ENCODE measurements at regions of chr9 and their contacts with region 1.

Region 1: DNA sequence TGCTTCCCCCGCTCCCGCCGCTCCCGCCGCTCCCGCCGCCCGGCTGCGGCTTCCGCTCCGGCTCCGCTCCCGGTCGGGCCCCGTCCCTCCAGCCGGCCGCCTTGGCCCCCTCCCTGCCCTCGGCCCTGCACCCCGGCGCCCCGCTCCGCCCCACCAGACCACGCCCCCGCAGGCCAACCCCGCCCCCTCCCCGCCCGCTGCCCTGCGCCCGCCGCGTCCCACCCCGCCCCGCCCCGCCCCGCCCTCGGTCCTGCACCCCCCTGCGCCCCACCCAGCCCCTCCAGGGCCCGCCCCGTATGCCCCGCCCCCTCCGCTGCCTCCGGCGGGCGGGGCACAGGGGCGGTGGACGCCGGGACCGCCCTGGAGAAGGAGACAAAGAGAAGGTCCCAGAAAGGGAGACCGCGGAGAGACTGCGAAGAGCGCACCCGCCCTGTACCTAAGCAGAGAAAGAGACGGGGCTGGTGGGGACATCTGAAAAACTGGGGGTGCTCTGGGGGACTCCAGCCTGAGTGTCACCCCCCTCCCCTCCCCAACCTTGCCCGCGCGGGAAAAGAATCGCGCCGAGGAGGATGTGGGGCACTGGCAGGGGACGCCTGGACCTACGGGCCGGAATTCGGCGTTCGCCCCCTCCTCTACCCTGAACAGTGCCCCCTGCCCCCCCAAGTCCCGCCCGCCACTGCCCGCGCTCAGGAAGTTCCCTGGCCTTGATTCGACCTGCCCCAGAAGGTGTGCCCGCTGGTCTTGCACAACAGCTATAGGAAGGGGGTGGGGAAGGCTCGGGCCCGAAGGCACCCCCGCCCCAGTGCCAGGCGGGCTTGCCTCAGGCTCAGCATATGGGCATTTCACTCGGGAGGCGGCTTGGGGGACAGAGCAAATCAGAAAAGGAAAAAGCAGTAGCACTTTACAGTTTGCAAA is 42.8 kb upstream of the STXBP1 start:
- DNase-seq: peak; percentile 74
- H3K4me3 Mint-ChIP-seq: peak overlapping the region; percentile 77
- H3K27ac Mint-ChIP-seq: peak overlapping the region; percentile 12
- H3K4me1 Mint-ChIP-seq: peaks cover 18% of the 10 kb centered on the region
- H3K27me3 Mint-ChIP-seq: no peaks in the 10 kb centered on the region

Region 2: GRCh38 chr9:127166651-127167524 is 402.3 kb before region 1 on chr9:
- CTCF ChIA-PET with region 1: no interaction called
- intact Hi-C with region 1: no loop called
- DNase-seq: peak; percentile 20
- H3K4me3 Mint-ChIP-seq: no peak overlapping the region
- H3K27ac Mint-ChIP-seq: no peak overlapping the region
- H3K4me1 Mint-ChIP-seq: peaks cover 12% of the 10 kb centered on the region
- H3K27me3 Mint-ChIP-seq: no peaks in the 10 kb centered on the region

Region 3: DNA sequence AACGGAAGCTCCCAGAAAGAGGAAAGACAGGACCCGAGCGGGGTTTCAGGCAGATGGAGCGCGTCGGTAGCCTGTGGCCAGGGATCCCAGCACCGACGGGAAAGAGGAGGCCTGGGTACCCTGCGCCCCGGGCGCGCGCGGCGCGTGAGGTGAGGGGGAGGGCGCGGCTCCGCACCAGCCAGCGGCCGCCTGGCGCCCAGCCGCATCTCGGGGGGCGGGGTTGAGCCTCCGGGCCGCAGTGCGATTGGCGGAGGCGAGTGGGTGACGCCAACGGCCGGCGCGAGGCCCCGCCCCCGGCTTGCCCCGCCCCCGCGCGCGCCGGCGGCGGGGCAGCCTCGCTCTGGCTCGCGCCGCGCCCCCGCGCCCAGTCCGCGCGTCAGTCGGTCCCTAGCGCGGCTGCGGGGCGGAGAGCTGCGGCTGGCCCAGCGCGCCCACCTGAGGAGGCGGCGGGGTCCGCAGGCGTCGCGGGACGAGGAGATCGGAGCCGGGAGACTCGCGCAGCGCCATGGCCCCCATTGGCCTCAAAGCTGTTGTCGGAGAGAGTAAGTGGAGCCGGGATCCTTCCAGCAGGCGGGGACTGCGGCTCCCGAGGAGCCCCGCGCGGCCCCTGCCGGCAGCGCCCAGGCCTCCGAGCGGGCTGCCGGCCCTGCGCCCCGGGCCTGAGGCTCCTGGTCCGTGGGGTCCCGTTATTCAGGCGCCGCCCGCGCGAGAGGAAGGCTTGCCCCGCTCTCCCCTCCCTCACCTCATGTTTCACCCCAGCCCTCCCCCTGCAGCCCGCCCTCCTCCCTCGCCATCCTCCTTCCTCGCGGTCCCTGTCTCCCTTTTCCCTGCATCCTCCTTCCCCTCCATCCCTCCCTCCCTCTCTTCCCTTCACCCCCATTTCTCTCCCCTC is 42.9 kb after region 1 on chr9 and contains the start of gene STXBP1:
- CTCF ChIA-PET with region 1: no interaction called
- intact Hi-C with region 1: loop called (anchors 2 kb)
- DNase-seq: peak; percentile 86
- H3K4me3 Mint-ChIP-seq: peak within 1 kb of the TSS; percentile 94
- H3K27ac Mint-ChIP-seq: no peak within 1 kb of the TSS
- H3K4me1 Mint-ChIP-seq: peaks cover 21% of the 10 kb centered on the region
- H3K27me3 Mint-ChIP-seq: peaks cover 15% of the 10 kb centered on the region
- total RNA-seq, gene STXBP1: 17.4 to 17.8 TPM